HCT116 (cell line): ENCODE measurements at regions of chr4 and their contacts with region 1.

Region 1: DNA sequence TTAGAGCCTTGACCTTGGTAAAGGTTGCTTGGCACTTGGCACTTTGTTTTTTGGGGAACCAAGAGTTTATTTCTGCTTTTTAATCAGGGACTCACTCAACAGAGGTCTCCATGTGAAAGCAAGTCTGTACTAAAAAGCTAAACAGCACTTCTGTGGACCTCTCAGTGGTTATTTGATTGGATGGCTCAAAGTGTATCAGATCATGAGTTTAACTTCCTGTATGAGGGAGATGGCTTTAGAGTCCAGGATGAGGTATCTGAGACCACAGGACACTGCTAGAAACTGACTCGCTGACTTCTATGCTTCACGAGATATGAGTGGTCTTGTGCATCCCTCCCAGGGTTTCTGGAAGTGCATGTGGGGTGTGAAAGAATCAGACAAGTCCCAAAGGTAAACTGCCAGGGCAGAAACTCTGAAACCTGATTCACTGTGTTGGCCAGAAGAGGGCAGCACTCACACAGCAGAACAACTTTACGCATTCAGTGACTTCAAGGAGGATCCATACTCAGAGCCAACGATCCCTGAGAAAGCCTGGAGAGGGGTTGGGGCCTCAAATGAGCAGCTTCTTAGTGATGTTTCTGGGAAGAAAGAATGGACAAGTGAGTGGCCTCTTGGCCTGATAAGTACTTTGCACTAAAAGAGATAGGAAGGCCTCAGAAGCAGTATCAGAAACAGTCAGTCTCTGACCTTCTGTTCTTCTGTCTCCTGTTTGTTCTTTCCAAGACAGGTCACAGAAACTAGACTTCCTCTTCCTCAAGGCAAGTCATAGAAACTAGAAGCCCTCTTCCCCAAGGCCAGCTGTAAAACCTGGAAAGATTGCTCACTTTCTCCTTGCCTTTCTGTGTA is 220.3 kb upstream of the CXCL13 start:
- DNase-seq: peak; percentile 54
- ATAC-seq: peak; percentile 97
- H3K4me3 ChIP-seq: no peak overlapping the region
- H3K27ac ChIP-seq: no peak overlapping the region
- H3K4me1 ChIP-seq: no peaks in the 10 kb centered on the region
- H3K27me3 ChIP-seq: peaks cover 15% of the 10 kb centered on the region
- CTCF ChIP-seq: peak; percentile 79 to 86 (median 82)
- POLR2A ChIP-seq: no peak
- RAD21 ChIP-seq: peak; percentile 84

Region 2: GRCh38 chr4:77433418-77433733 is 48.0 kb after region 1 on chr4:
- CTCF ChIA-PET with region 1: no interaction called
- POLR2A ChIA-PET with region 1: no interaction called
- RAD21 ChIA-PET with region 1: no interaction called
- intact Hi-C with region 1: loop called (anchors 1 kb)
- DNase-seq: peak; percentile 42
- ATAC-seq: peak; percentile 85
- H3K4me3 ChIP-seq: no peak overlapping the region
- H3K27ac ChIP-seq: no peak overlapping the region
- H3K4me1 ChIP-seq: peaks cover 0 to 4% of the 10 kb centered on the region in 2 experiments; a peak in 2 of 4 replicates
- H3K27me3 ChIP-seq: 0 out of 2 replicates have a peak, but pooled peaks cover 5% of the 10 kb centered on the region
- CTCF ChIP-seq: peak; percentile 49 to 68 (median 59); a peak in 5 of 6 replicates
- POLR2A ChIP-seq: no peak
- RAD21 ChIP-seq: peak; percentile 75

Region 3: DNA sequence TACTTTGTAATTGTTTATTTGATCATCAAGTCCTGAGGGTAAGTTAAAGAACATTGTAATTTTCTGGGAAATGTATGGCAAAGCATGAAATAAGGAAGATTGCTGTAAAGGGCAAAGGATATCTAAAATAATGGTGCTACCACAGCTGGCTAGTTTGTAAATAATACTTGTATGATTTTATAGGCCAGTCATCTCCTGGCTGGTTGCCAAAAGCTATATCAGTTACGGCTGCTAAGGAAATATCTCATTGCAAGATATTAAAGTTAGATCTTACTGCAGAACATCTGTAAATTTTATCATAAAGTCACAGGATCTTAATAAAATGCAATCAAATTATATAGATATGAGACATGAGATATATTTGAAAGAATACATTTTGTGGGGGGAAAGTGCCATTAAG is 69.5 kb after region 1 on chr4:
- CTCF ChIA-PET with region 1: no interaction called
- POLR2A ChIA-PET with region 1: no interaction called
- RAD21 ChIA-PET with region 1: no interaction called
- intact Hi-C with region 1: no loop called
- DNase-seq: no peak
- ATAC-seq: no peak
- H3K4me3 ChIP-seq: no peak overlapping the region
- H3K27ac ChIP-seq: no peak overlapping the region
- H3K4me1 ChIP-seq: no peaks in the 10 kb centered on the region
- H3K27me3 ChIP-seq: no peaks in the 10 kb centered on the region
- CTCF ChIP-seq: no peak
- POLR2A ChIP-seq: no peak
- RAD21 ChIP-seq: no peak

Region 4: GRCh38 chr4:77473509-77473908 is 88.2 kb after region 1 on chr4:
- CTCF ChIA-PET with region 1: no interaction called
- POLR2A ChIA-PET with region 1: no interaction called
- RAD21 ChIA-PET with region 1: no interaction called
- intact Hi-C with region 1: loop called (anchors 1 kb)
- DNase-seq: peak; percentile 39
- ATAC-seq: peak; percentile 84
- H3K4me3 ChIP-seq: no peak overlapping the region
- H3K27ac ChIP-seq: no peak overlapping the region
- H3K4me1 ChIP-seq: no peaks in the 10 kb centered on the region
- H3K27me3 ChIP-seq: peaks cover 22% of the 10 kb centered on the region; the same call in 1 of the 2 replicates
- CTCF ChIP-seq: peak; percentile 30 to 68 (median 56); a peak in 5 of 6 replicates
- POLR2A ChIP-seq: no peak
- RAD21 ChIP-seq: peak; percentile 46

Region 5: GRCh38 chr4:77600521-77601451 is 215.4 kb after region 1 on chr4:
- CTCF ChIA-PET with region 1: no interaction called
- POLR2A ChIA-PET with region 1: no interaction called
- RAD21 ChIA-PET with region 1: no interaction called
- intact Hi-C with region 1: loop called (anchors 2 kb)
- DNase-seq: peak; percentile 37
- ATAC-seq: peak; percentile 76
- H3K4me3 ChIP-seq: no peak overlapping the region
- H3K27ac ChIP-seq: no peak overlapping the region
- H3K4me1 ChIP-seq: no peaks in the 10 kb centered on the region
- H3K27me3 ChIP-seq: peaks cover 26% of the 10 kb centered on the region
- CTCF ChIP-seq: peak; percentile 68 to 88 (median 87)
- POLR2A ChIP-seq: no peak
- RAD21 ChIP-seq: peak; percentile 71

Region 6: DNA sequence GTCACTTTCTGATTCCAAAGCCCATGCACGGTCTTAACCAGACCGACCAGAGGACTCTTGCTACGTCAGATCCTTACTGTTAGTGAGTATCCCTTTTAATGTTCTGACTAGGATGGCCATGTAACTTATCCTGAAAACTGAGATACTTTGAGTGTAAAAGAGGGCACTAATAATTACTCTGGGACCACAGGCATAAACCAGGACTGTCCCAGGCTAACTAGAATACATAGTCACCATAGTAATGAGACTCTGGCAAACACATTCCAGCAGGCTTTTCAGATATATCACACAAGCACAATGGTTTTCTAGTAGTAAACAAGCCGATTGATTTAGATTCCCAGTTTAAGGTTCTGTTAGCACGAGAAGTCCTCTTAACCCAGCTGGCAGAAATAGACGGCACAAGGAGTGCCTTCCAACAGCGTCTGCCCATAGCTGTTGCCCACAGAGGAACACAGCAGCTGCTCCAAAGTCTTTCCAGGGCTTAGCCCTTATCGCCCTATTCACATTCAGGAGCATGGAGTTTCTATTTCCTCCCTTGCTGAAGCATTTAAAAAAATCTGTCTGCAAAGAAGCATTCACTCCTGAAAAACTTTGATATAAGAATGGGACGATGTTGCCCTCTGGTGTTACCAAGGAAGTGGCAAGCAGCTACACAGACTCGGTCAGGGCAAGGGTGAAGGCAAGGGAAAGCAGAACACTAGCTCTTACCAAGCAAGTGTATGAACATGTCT is 312.7 kb after region 1 on chr4:
- CTCF ChIA-PET with region 1: no interaction called
- POLR2A ChIA-PET with region 1: no interaction called
- RAD21 ChIA-PET with region 1: no interaction called
- intact Hi-C with region 1: loop called (anchors 1 kb)
- DNase-seq: peak; percentile 29
- ATAC-seq: peak; percentile 71
- H3K4me3 ChIP-seq: no peak overlapping the region
- H3K27ac ChIP-seq: no peak overlapping the region
- H3K4me1 ChIP-seq: peaks cover 11 to 24% of the 10 kb centered on the region in 2 experiments; a peak in 3 of 4 replicates
- H3K27me3 ChIP-seq: peaks cover 5% of the 10 kb centered on the region; the same call in 1 of the 2 replicates
- CTCF ChIP-seq: peak; percentile 59 to 70 (median 65); a peak in 5 of 6 replicates
- POLR2A ChIP-seq: no peak
- RAD21 ChIP-seq: peak; percentile 78